ENCODE measurements at regions of chr7 and their contacts with region 1.

Region 1: DNA sequence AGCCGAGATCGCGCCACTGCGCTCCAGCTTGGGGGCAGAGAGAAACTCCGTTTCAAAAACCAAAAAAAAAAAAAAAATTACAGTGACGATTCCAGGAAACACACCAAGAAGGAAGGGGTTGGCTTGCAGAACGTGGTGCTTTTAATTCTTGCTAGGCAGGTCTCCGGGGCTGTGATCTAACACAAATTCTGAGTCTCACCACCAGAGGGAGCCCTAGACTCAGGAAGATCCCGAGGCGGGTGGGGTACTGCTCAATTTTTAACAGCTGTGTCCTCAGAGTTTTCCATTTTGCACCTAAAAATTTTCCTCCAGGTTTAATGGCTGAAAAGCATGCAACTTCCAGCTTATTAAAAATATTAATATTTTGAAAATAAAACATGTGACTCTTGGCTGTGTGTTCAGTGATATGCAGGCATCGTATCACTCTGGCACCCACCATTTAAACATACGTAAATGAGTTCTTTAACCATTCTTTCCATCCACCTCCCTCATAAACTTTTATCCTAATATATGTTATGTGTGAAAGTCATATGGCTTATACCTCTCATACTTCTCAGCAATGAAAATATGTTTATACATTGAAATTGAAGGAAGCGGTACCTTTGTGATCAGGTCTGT is 26.5 kb upstream of the NUB1 start:
- DNase-seq: peak; percentile 85
- ATAC-seq: peak; percentile 86
- H3K4me3 ChIP-seq: no peak overlapping the region
- H3K4me3 Mint-ChIP-seq: no peak overlapping the region
- H3K27ac ChIP-seq: no peak overlapping the region
- H3K27ac Mint-ChIP-seq: no peak overlapping the region
- H3K4me1 ChIP-seq: peaks cover 0 to 3% of the 10 kb centered on the region in 2 donors
- H3K4me1 Mint-ChIP-seq: peaks cover 2% of the 10 kb centered on the region
- H3K27me3 ChIP-seq: peaks cover 0 to 4% (median 0%) of the 10 kb centered on the region in 4 experiments
- H3K27me3 Mint-ChIP-seq: no peaks in the 10 kb centered on the region
- CTCF ChIP-seq: peak; percentile 85

Region 2: DNA sequence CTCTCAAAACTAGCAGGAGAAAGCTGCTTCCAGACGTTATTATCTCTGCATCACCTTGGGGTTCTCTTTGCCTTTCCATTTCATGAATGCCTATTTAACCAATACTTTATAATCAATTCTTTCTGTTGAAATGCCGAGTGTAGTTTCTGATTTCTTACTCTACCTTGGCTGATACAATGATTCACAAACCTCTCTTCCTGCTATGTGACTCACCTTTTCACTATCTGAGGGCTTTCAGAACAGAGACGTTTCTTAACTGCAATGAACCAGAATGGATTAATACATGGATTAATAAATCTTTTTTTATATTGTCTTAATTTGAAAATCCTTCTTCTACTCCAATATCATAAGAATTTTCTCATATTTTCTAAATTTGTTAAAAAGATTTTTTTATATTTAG is 1771.1 kb before region 1 on chr7:
- CTCF ChIA-PET with region 1: no interaction called
- POLR2A ChIA-PET with region 1: interaction called, 11 read pairs
- intact Hi-C with region 1: no loop called
- DNase-seq: no peak
- ATAC-seq: no peak
- H3K4me3 ChIP-seq: no peak overlapping the region
- H3K4me3 Mint-ChIP-seq: no peak overlapping the region
- H3K27ac ChIP-seq: no peak overlapping the region
- H3K27ac Mint-ChIP-seq: no peak overlapping the region
- H3K4me1 ChIP-seq: no peaks in the 10 kb centered on the region
- H3K4me1 Mint-ChIP-seq: peaks cover 2% of the 10 kb centered on the region
- H3K27me3 ChIP-seq: no peaks in the 10 kb centered on the region
- H3K27me3 Mint-ChIP-seq: no peaks in the 10 kb centered on the region
- CTCF ChIP-seq: no peak

Region 3: GRCh38 chr7:151304856-151305255 is 10.3 kb before region 1 on chr7:
- CTCF ChIA-PET with region 1: interaction called, 16 read pairs
- POLR2A ChIA-PET with region 1: no interaction called
- intact Hi-C with region 1: no loop called
- DNase-seq: no peak
- ATAC-seq: no peak
- H3K4me3 ChIP-seq: no peak overlapping the region
- H3K4me3 Mint-ChIP-seq: no peak overlapping the region
- H3K27ac ChIP-seq: no peak overlapping the region
- H3K27ac Mint-ChIP-seq: no peak overlapping the region
- H3K4me1 ChIP-seq: peaks cover 7 to 13% of the 10 kb centered on the region in 2 donors
- H3K4me1 Mint-ChIP-seq: peaks cover 10% of the 10 kb centered on the region
- H3K27me3 ChIP-seq: peaks cover 0 to 57% (median 22%) of the 10 kb centered on the region in 4 experiments
- H3K27me3 Mint-ChIP-seq: peaks cover 37% of the 10 kb centered on the region
- CTCF ChIP-seq: no peak

Region 4: DNA sequence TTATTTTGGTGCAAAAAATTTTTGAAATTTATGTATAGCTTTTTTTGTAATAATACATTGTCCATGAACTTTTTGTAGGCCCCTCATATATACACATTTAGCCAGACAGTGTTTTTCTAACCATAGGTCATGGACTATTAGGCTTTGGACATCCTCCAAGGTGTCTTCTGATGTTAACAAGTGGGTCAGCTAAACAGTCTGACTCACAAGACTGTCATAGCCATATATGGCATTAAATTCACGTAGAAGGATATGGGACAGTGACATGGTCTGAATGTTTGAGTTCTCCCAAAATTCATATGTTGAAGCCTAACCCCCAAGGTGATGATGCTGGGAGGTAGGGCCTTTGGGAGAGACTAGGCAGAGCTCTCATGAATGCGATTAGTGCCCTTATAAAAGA is 12.5 kb after region 1 on chr7:
- CTCF ChIA-PET with region 1: interaction called, 38 read pairs
- POLR2A ChIA-PET with region 1: no interaction called
- intact Hi-C with region 1: no loop called
- DNase-seq: no peak
- ATAC-seq: no peak
- H3K4me3 ChIP-seq: no peak overlapping the region
- H3K4me3 Mint-ChIP-seq: no peak overlapping the region
- H3K27ac ChIP-seq: no peak overlapping the region
- H3K27ac Mint-ChIP-seq: no peak overlapping the region
- H3K4me1 ChIP-seq: no peaks in the 10 kb centered on the region
- H3K4me1 Mint-ChIP-seq: no peaks in the 10 kb centered on the region
- H3K27me3 ChIP-seq: no peaks in the 10 kb centered on the region
- H3K27me3 Mint-ChIP-seq: peaks cover 3% of the 10 kb centered on the region
- CTCF ChIP-seq: no peak

Region 5: GRCh38 chr7:151341357-151342101 is 26.4 kb after region 1 on chr7 and contains the start of gene NUB1:
- CTCF ChIA-PET with region 1: interaction called, 42 read pairs
- POLR2A ChIA-PET with region 1: no interaction called
- intact Hi-C with region 1: loop called (anchors 1 kb)
- DNase-seq: peak; percentile 93
- ATAC-seq: peak; percentile 95
- H3K4me3 ChIP-seq: peak within 1 kb of the TSS; percentile 62 to 100 (median 84)
- H3K4me3 Mint-ChIP-seq: peak within 1 kb of the TSS; percentile 88
- H3K27ac ChIP-seq: peak within 1 kb of the TSS; percentile 79 to 80
- H3K27ac Mint-ChIP-seq: peak within 1 kb of the TSS; percentile 95
- H3K4me1 ChIP-seq: peaks cover 29 to 36% of the 10 kb centered on the region in 2 donors
- H3K4me1 Mint-ChIP-seq: peaks cover 36% of the 10 kb centered on the region
- H3K27me3 ChIP-seq: no peaks in the 10 kb centered on the region
- H3K27me3 Mint-ChIP-seq: no peaks in the 10 kb centered on the region
- CTCF ChIP-seq: no peak
- total RNA-seq, gene NUB1: 95.4 and 104 TPM in 2 replicates

Region 6: DNA sequence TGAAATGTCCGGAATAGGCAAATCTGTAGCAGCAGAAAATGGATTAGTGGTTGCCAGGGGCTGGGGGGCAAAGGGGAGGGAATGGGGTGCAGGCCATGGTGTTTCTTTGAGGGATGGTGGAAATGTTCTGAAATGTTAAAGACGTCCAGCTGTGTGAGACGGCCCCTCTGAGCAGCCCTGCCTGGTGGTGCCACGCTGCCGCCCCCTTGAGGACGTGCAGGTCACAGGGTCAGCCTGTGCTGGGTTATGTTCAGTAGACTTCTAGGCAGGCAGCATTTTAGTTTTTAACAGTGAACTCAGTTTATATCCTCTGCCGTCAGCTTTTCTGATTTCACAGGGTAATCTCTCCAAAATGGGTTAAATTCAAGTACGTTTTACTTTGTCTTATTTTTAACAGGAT is 35.9 kb after region 1 on chr7:
- CTCF ChIA-PET with region 1: interaction called, 225 read pairs
- POLR2A ChIA-PET with region 1: no interaction called
- intact Hi-C with region 1: loop called (anchors 1 kb)
- DNase-seq: peak; percentile 47
- ATAC-seq: no peak
- H3K4me3 ChIP-seq: no peak overlapping the region
- H3K4me3 Mint-ChIP-seq: peak overlapping the region; percentile 56
- H3K27ac ChIP-seq: peak overlapping the region; percentile 82 to 99
- H3K27ac Mint-ChIP-seq: peak overlapping the region; percentile 76
- H3K4me1 ChIP-seq: peaks cover 36 to 41% of the 10 kb centered on the region in 2 donors
- H3K4me1 Mint-ChIP-seq: peaks cover 46% of the 10 kb centered on the region
- H3K27me3 ChIP-seq: no peaks in the 10 kb centered on the region
- H3K27me3 Mint-ChIP-seq: no peaks in the 10 kb centered on the region
- CTCF ChIP-seq: no peak

Region 7: GRCh38 chr7:151671514-151671913 is 356.4 kb after region 1 on chr7:
- CTCF ChIA-PET with region 1: no interaction called
- POLR2A ChIA-PET with region 1: no interaction called
- intact Hi-C with region 1: no loop called
- DNase-seq: no peak
- ATAC-seq: no peak
- H3K4me3 ChIP-seq: no peak overlapping the region
- H3K4me3 Mint-ChIP-seq: no peak overlapping the region
- H3K27ac ChIP-seq: no peak overlapping the region
- H3K27ac Mint-ChIP-seq: no peak overlapping the region
- H3K4me1 ChIP-seq: no peaks in the 10 kb centered on the region
- H3K4me1 Mint-ChIP-seq: no peaks in the 10 kb centered on the region
- H3K27me3 ChIP-seq: no peaks in the 10 kb centered on the region
- H3K27me3 Mint-ChIP-seq: no peaks in the 10 kb centered on the region
- CTCF ChIP-seq: no peak

Measured in B cell (primary cell).